ENCODE measurements at regions of chr4 and their contacts with region 1.

Region 1: DNA sequence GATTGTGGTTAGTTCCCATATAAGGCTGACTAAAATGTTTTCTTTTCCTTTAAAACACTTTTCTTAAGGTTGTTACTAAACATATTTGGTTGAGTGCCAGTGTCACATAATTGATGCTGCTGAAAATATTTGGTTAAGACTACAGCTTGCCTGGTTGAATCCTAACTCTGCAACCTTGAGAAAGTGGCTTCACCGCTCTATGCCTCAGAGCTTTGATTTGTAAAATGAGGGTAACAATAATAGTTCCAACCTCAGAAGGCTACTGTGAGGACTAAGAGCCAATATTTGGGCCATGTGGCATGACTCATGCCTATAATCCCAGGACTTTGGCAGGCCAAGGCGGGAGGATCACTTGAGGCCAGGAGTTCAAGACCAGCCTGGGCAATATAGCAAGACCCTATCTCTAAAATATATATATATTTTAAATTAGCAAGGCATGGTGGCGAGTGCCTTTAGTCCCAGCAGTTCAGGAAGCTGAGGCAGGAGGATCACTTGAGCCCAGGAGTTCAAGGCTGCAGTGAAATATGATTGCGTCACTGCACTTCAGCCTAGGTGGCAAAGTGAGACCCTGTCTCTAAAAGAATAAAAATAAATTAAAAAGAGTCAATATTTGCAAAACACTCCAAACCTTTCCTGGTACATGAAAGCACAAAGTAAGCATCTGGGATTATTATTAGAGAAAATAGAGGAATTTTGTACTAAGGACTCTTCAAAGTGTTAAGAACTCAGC is 7.1 kb upstream of the NEIL3 start:
- DNase-seq: peak in 1 of 2 donors; percentile 75
- H3K4me3 ChIP-seq: no peak overlapping the region
- H3K27ac ChIP-seq: peak overlapping the region; percentile 54 to 60
- H3K4me1 ChIP-seq: peaks cover 0 to 14% of the 10 kb centered on the region in 2 donors
- H3K27me3 ChIP-seq: no peaks in the 10 kb centered on the region
- CTCF ChIP-seq: no peak

Region 2: GRCh38 chr4:176964116-176964691 is 338.3 kb before region 1 on chr4:
- intact Hi-C with region 1: no loop called
- DNase-seq: no peak
- H3K4me3 ChIP-seq: no peak overlapping the region
- H3K27ac ChIP-seq: no peak overlapping the region
- H3K4me1 ChIP-seq: no peaks in the 10 kb centered on the region
- H3K27me3 ChIP-seq: no peaks in the 10 kb centered on the region
- CTCF ChIP-seq: no peak

Region 3: GRCh38 chr4:177356206-177356605 is 53.7 kb after region 1 on chr4:
- intact Hi-C with region 1: no loop called
- DNase-seq: no peak
- H3K4me3 ChIP-seq: no peak overlapping the region
- H3K27ac ChIP-seq: no peak overlapping the region
- H3K4me1 ChIP-seq: no peaks in the 10 kb centered on the region
- H3K27me3 ChIP-seq: no peaks in the 10 kb centered on the region
- CTCF ChIP-seq: no peak

Region 4: DNA sequence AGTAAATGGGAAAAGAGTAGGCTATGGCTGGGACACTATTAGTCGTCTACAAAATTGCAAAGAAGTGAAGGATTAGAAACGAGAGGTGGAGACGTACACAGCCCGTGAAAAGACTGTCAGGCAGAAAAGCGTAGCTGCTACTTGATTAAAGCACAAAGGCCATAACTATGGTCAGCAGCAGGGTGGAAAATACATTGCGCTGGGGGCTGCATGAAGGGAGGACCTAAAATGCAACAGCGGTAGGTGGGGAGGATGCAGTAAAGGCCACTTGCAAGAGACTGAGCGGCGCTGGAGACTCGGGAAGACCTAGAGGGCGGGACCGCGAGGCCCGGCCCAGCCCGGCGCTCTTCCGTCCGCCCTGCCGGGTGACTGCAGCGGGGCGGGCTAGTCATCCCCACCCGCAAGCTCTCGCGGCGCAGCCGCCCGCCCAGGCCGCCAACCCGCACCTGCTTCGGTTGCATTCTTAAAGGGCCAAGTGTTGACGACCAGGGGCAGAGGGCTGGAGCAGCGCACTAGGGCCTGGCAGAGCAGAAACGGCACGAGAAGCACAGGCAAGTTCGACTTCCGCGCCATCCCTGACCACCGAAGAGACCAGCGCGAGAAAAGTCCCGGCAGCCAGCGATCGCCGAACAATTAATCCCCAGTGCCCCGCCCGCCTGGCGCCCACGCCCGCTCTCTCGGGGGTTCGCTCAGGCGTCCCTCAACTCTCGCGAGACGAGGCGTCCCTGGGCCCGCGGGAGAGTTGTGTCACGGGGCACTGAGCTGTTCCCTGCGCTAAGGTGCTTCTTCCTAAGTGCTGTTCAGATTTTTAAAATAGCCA is 139.5 kb after region 1 on chr4 and contains the start of gene AGA:
- intact Hi-C with region 1: loop called (anchors 5 kb)
- DNase-seq: peak; percentile 88 to 98
- H3K4me3 ChIP-seq: peak within 1 kb of the TSS; percentile 60 to 83
- H3K27ac ChIP-seq: peak within 1 kb of the TSS; percentile 89 to 92
- H3K4me1 ChIP-seq: peaks cover 3 to 4% of the 10 kb centered on the region in 2 donors
- H3K27me3 ChIP-seq: no peaks in the 10 kb centered on the region
- CTCF ChIP-seq: no peak
- total RNA-seq, gene AGA: 4.5 TPM